ENCODE measurements at regions of chr12 and their contacts with region 1.

Region 1: GRCh38 chr12:10749700-10750384 is 26.7 kb upstream of the YBX3 start:
- DNase-seq: peak; percentile 90

Region 2: GRCh38 chr12:11183011-11183410 is 433.2 kb after region 1 on chr12:
- in situ Hi-C with region 1: loop called (anchors 25 kb)
- DNase-seq: no peak

Measured in KBM-7 (cell line).